A549 (cell line): ENCODE measurements at regions of chr9 and their contacts with region 1.

Region 1: DNA sequence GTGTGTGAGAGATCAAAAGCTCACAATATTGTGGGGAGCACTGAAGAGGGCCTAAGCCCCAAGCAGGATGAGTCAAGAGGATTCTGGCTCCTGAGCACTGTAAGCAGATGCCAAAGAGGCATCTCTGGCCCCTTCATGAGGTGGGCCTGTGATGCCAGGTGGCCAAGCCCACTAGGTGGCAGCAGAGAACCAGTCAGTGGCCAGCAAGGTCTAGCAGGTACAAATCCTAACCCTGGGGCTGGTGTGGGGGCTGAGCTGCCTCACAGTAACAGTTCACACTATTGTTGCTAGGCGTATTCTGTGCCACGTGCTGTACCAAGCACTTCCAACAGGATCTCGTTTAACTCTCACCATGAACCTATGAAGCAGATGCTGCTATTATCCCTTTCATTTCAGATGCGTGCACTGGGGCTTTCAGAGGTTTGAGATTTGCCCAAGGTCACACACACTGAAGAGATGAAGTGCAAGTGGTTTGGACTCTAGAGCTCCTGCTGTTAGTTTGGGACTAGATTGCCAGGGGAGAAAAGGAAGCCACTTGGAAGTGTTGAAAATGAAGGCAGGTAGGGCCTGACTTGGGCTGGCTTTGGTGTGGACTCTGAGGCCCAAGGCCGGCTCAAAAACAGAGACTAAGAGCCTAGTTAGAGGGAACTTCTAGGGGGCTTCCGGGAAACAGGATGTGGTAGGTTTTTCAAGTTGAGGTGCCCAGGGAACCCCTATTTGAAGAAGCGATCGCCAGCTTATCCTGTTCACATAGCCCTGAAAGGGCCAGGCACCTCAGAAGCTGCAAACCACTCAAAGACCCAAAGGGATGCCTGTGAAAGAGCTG is 4.4 kb upstream of the MLANA start:
- DNase-seq: peak; percentile 72 to 82
- ATAC-seq: peak; percentile 96 to 99
- H3K4me3 ChIP-seq: no peak overlapping the region
- H3K27ac ChIP-seq: peak overlapping the region in 1 of 2 experiments; percentile 62; a peak in 3 of 6 replicates
- H3K4me1 ChIP-seq: 0 out of 3 replicates have a peak, but pooled peaks cover 3% of the 10 kb centered on the region
- CTCF ChIP-seq: peak; percentile 92
- EP300 ChIP-seq: no peak
- POLR2A ChIP-seq: no peak
- RAD21 ChIP-seq: peak; percentile 95 to 96

Region 2: DNA sequence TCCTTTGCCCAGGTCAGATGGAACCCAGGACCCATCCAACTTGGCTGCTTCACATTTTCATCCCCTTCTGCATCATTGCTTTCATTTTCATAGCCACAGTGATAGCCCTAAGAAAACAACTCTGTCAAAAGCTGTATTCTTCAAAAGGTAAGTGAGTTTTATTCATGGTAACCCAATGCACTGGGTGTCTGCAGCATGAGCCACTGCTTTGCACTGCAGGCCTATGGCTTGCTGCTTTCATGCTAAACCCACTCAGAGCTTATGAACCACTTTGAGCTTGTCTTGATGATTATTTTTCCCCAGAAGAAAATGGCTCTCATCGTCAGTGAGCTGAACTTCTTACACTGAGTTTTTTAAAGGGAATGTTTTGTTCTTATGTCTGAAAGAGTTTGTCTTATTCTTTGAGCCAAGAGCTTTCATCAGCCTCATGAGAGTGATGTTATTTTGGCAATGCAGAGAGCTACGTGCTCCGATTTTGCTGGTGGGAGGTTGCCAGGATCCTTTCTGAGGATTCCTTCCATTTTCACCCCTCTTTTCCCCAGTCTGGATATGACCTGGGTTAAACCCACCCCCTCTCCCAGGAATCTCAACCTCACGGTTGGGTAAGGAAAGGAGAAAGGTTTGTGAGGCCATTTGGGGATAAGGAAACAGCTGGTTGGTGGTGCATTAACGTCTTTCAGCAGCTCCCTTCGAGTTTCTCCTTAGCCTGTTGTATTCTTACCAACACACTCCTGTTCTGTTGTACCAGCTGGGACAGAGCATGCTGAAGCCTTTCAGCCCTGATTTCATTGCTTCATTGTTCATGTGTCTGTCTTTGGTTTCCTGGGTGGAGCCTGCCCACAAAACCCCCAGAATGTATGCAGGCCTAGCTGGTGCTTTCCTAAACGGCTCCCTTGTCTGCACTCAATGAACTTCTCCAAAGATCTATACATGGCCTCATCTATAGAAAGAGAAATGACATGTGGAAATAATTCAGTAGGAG is 328.4 kb before region 1 on chr9:
- CTCF ChIA-PET with region 1: no interaction called
- POLR2A ChIA-PET with region 1: no interaction called
- DNase-seq: no peak
- ATAC-seq: no peak
- H3K4me3 ChIP-seq: no peak overlapping the region
- H3K27ac ChIP-seq: no peak overlapping the region
- H3K4me1 ChIP-seq: no peaks in the 10 kb centered on the region
- CTCF ChIP-seq: no peak
- EP300 ChIP-seq: no peak
- POLR2A ChIP-seq: no peak
- RAD21 ChIP-seq: no peak

Region 3: GRCh38 chr9:5629312-5630080 is 256.8 kb before region 1 on chr9:
- CTCF ChIA-PET with region 1: no interaction called
- POLR2A ChIA-PET with region 1: no interaction called
- DNase-seq: peak; percentile 25 to 41
- ATAC-seq: peak; percentile 45 to 69
- H3K4me3 ChIP-seq: peak overlapping the region; percentile 84
- H3K27ac ChIP-seq: peak overlapping the region; percentile 87 to 97
- H3K4me1 ChIP-seq: peaks cover 48% of the 10 kb centered on the region
- CTCF ChIP-seq: no peak
- EP300 ChIP-seq: no peak
- POLR2A ChIP-seq: no peak
- RAD21 ChIP-seq: no peak

Region 4: DNA sequence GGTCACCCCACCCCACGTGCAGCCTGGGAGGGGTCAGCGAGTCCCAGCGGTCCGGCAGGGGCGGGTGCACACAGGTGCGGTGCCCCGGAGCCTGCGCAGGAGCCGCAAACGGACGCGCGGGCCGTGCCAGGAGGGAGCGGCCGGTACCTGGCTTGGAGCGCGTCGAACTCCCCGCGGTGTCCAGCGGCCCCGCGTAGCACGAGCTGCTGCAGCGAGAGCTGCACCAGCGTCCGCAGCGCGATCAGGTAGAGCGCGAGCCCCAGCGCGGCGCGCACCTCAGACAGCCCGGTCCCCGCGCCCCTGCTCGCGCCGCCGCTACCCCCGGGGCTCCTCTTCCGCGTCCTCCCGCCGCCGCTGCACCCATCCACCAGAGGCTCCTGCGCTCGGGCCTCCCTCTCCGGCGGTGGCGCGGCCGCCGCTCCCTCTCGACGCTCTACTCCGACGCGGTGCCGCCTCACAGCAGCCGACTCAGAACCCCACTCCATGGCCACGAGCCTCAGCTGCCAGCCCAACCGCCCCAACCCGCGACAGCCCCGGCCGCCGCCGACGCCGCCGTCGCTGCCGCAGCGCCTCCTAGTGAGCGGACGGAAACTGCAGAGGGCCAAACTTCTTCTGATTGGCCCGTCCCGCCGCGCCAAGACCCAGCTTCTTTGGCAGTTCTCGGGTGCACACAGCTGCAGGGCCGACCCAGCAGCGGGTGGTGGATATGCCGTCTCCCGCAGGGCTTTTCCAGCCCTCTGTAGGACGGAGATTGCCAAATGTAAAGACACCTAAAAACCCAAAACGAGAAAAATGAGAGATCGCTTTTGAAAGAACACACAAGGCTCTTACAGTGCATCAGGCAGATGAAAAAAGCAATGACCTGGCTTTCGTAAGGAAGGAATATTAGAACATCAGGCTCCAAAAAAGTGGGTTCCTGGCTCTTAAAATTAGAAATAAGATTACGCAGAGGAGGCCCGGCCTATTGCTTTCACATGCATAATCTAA is 53.5 kb before region 1 on chr9 and contains the start of gene ERMP1:
- CTCF ChIA-PET with region 1: interaction called, 19 read pairs
- POLR2A ChIA-PET with region 1: interaction called, 4 read pairs
- DNase-seq: peak; percentile 86 to 88
- ATAC-seq: peak; percentile 91 to 95
- H3K4me3 ChIP-seq: peak within 1 kb of the TSS; percentile 82
- H3K27ac ChIP-seq: peak within 1 kb of the TSS; percentile 92 to 96
- H3K4me1 ChIP-seq: peaks cover 21% of the 10 kb centered on the region
- CTCF ChIP-seq: peak; percentile 87
- EP300 ChIP-seq: no peak
- POLR2A ChIP-seq: peak; percentile 75
- RAD21 ChIP-seq: peak; percentile 47 to 72
- polyA plus RNA-seq, gene ERMP1: 53.4 and 66.1 TPM in 2 replicates

Region 5: DNA sequence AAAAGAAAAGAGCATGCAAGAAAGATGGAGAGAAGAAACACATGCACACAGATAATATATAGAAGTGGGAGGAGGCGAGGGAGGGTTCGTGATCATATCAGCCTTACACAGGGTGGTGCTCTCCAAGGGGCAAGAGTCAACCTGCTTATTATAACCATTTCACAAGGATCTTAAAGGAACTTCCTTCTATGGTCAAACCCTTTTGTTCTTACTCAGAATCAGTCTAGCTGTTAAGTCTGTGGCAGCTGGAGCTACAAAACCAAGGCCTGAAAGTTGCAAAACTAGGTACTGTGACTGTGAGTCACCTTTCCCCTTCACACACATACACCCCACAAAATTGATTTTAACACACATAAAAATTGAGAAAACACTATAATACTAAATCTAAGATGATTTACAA is 34.9 kb before region 1 on chr9:
- CTCF ChIA-PET with region 1: interaction called, 15 read pairs
- POLR2A ChIA-PET with region 1: no interaction called
- DNase-seq: no peak
- ATAC-seq: peak; percentile 26 to 61; a peak in 2 of 6 replicates
- H3K4me3 ChIP-seq: no peak overlapping the region
- H3K27ac ChIP-seq: peak overlapping the region in 1 of 2 experiments; percentile 0; a peak in 1 of 6 replicates
- H3K4me1 ChIP-seq: peaks cover 10% of the 10 kb centered on the region; the same call in 1 of the 3 replicates
- CTCF ChIP-seq: no peak
- EP300 ChIP-seq: no peak
- POLR2A ChIP-seq: no peak
- RAD21 ChIP-seq: no peak

Region 6: DNA sequence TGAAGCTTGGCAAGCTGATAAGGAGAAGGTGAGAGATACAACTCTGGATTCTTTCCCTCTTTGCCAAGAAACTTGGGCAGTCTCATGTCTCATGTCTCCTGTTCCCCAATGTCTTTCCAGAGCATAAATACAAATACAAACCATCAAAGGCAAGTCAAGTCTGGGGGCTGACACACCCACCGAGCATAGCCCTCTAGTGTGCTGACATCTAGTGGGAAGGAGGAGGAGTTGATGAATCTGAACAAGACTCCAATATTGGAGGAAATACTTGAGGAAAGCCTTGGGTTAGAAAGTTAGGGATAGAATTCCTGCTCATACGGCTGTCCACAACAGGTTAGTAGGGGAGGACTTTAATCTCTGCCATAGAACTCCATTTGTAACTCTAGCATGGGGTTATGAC is 13.0 kb after region 1 on chr9:
- CTCF ChIA-PET with region 1: interaction called, 102 read pairs
- POLR2A ChIA-PET with region 1: no interaction called
- DNase-seq: peak in 1 of 2 experiments; percentile 36
- ATAC-seq: peak in 1 of 2 experiments; percentile 74; a peak in 3 of 6 replicates
- H3K4me3 ChIP-seq: no peak overlapping the region
- H3K27ac ChIP-seq: no peak overlapping the region
- H3K4me1 ChIP-seq: peaks cover 9% of the 10 kb centered on the region
- CTCF ChIP-seq: peak; percentile 16; the same call in 1 of the 3 replicates
- EP300 ChIP-seq: no peak
- POLR2A ChIP-seq: no peak
- RAD21 ChIP-seq: peak; percentile 34 to 60; a peak in 4 of 5 replicates

Region 7: DNA sequence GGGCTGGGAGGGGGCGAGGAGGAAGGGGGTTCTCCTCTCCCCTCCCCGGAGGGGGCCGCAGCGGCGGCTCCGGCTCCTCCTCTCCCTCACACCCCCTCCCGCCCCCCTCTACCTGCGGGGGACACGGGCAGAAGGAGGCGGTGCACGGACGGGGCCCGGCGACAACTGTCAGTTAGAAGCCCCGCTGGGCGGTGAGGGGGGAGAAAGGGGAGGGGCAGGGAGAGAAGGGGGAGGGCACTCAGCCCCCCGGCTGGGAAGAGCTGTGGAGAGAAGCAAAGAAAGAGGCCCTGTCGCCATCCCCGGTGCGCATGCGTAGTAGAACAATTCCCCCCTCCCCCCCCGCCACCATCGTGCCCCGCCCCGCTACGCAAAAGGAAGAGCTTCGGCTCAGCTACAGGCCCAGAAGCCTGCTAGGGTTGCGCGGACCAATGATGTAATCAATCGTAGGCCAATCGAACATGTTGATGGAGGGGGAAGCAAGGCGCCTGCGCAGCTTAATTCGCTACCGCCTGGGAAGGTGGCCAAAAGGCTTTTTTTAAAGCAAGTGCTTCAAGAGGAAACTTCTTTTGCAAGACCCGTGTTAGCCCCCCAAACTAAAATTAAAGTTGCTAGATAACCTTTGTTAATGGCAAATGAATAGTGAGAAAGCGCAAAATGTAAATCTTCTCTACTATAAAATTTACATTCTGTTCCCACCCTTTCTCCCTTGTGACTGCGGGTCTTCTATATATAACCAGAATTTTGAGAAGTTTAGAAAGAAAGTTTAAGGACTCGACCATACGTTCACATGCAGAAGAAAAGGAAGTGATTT is 122.0 kb after region 1 on chr9:
- CTCF ChIA-PET with region 1: interaction called, 14 read pairs
- POLR2A ChIA-PET with region 1: no interaction called
- DNase-seq: peak; percentile 76 to 99
- ATAC-seq: peak; percentile 66 to 70
- H3K4me3 ChIP-seq: peak overlapping the region; percentile 98
- H3K27ac ChIP-seq: peak overlapping the region; percentile 98
- H3K4me1 ChIP-seq: peaks cover 18% of the 10 kb centered on the region; the same call in 2 of the 3 replicates
- CTCF ChIP-seq: no peak
- EP300 ChIP-seq: no peak
- POLR2A ChIP-seq: no peak
- RAD21 ChIP-seq: no peak

Region 8: GRCh38 chr9:6049798-6050197 is 163.5 kb after region 1 on chr9:
- CTCF ChIA-PET with region 1: interaction called, 63 read pairs
- POLR2A ChIA-PET with region 1: no interaction called
- DNase-seq: peak in 1 of 2 experiments; percentile 59
- ATAC-seq: peak in 1 of 2 experiments; percentile 46; a peak in 3 of 6 replicates
- H3K4me3 ChIP-seq: no peak overlapping the region
- H3K27ac ChIP-seq: no peak overlapping the region
- H3K4me1 ChIP-seq: no peaks in the 10 kb centered on the region
- CTCF ChIP-seq: peak; percentile 24; the same call in 1 of the 3 replicates
- EP300 ChIP-seq: no peak
- POLR2A ChIP-seq: no peak
- RAD21 ChIP-seq: peak in 1 of 2 experiments; percentile 45; a peak in 2 of 5 replicates

Region 9: GRCh38 chr9:6305954-6306563 is 419.7 kb after region 1 on chr9:
- CTCF ChIA-PET with region 1: interaction called, 59 read pairs
- POLR2A ChIA-PET with region 1: no interaction called
- DNase-seq: peak; percentile 23 to 56
- ATAC-seq: peak; percentile 78 to 82
- H3K4me3 ChIP-seq: no peak overlapping the region
- H3K27ac ChIP-seq: no peak overlapping the region
- H3K4me1 ChIP-seq: no peaks in the 10 kb centered on the region
- CTCF ChIP-seq: peak; percentile 80
- EP300 ChIP-seq: no peak
- POLR2A ChIP-seq: no peak
- RAD21 ChIP-seq: peak; percentile 86 to 90